ENCODE measurements at regions of chrX and their contacts with region 1.

Region 1: GRCh38 chrX:118807151-118808017 is 16.2 kb upstream of the ZCCHC12 start:
- DNase-seq: peak; percentile 24
- ATAC-seq: peak; percentile 90
- H3K4me3 ChIP-seq: no peak overlapping the region
- H3K27ac ChIP-seq: no peak overlapping the region
- H3K4me1 ChIP-seq: no peaks in the 10 kb centered on the region
- H3K27me3 ChIP-seq: no peaks in the 10 kb centered on the region
- CTCF ChIP-seq: peak; percentile 79

Region 2: DNA sequence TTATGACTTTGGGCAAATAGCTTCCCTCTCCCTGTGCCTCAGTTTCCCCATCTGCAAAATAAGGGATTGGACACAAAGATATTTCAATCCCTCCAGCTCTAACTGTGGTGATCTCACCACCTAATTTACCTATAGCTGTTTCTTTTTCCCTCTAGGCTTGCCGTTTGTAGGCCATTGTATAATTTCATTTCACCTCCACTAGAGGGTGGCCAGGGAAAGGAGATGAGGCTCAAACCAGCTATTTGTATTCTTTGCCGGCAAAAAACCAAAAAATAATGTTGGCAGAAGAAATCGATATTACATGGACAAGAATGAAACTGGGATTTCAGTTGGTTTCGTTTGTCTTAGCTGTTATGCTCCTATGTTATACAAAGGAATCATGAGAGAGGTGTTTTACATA is 347.9 kb before region 1 on chrX:
- CTCF ChIA-PET with region 1: no interaction called
- POLR2A ChIA-PET with region 1: no interaction called
- in situ Hi-C with region 1: no loop called
- intact Hi-C with region 1: loop called (anchors 10 kb)
- DNase-seq: peak; percentile 12
- ATAC-seq: peak; percentile 83
- H3K4me3 ChIP-seq: no peak overlapping the region
- H3K27ac ChIP-seq: no peak overlapping the region
- H3K4me1 ChIP-seq: no peaks in the 10 kb centered on the region
- H3K27me3 ChIP-seq: no peaks in the 10 kb centered on the region
- CTCF ChIP-seq: peak; percentile 73; the same call in 1 of the 2 replicates

Region 3: GRCh38 chrX:118637997-118638396 is 169.4 kb before region 1 on chrX:
- CTCF ChIA-PET with region 1: no interaction called
- POLR2A ChIA-PET with region 1: no interaction called
- in situ Hi-C with region 1: no loop called
- intact Hi-C with region 1: loop called (anchors 2 kb)
- DNase-seq: no peak
- ATAC-seq: peak; percentile 84
- H3K4me3 ChIP-seq: no peak overlapping the region
- H3K27ac ChIP-seq: no peak overlapping the region
- H3K4me1 ChIP-seq: no peaks in the 10 kb centered on the region
- H3K27me3 ChIP-seq: no peaks in the 10 kb centered on the region
- CTCF ChIP-seq: peak; percentile 57; the same call in 1 of the 2 replicates

Region 4: GRCh38 chrX:118928151-118928550 is 120.8 kb after region 1 on chrX:
- CTCF ChIA-PET with region 1: no interaction called
- POLR2A ChIA-PET with region 1: no interaction called
- in situ Hi-C with region 1: no loop called
- intact Hi-C with region 1: no loop called
- DNase-seq: no peak
- ATAC-seq: no peak
- H3K4me3 ChIP-seq: no peak overlapping the region
- H3K27ac ChIP-seq: no peak overlapping the region
- H3K4me1 ChIP-seq: no peaks in the 10 kb centered on the region
- H3K27me3 ChIP-seq: no peaks in the 10 kb centered on the region
- CTCF ChIP-seq: no peak